Uterus (tissue), 4 donors: ENCODE measurements at regions of chr10 and their contacts with region 1.

Region 1: DNA sequence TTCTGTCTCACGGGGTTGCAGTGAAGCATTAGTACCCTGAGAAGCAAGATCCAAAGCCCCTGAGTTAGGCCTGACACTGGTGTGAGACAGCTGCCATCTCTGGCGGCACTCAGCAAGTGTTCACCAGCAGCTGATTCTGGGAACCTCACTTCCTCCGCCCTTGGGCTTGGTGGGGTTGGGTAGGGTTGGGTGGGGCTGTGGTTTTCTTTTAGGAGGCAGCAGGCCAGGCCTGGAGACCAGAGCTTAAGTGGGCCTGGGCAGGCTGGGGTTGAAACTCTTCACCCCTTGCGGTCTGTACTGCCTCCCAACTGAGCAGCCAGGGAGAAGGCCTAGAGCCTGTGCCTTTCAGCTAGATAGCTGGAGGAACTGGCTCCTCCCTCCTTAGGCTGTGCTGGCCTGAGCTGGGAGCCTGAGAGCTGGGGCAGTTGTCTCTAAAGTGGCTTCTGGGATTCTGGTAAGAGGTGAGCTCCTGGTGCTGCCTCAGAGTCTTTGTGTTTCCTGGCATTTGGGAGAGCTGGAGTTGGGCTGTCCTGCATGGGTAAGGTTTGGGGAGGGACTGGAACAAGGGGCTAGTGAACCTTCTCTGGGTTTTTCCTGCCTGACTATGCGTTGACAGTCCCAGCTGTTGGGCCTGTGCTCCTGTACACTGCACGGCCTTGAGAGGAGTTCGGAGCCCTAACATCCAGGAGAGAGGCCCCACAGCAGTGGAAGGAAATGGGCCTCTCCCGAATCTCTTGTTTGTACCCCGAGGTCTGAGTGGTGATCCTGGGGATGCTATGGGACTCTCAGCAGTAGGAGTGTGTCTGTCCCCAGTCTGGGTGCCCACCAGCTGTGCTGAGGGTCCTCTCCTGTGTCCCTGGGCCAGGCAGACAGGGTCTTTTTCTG is 5.2 kb downstream of the TSPAN14 start:
- DNase-seq: peak in 1 of 2 donors; percentile 36
- H3K4me3 ChIP-seq: no peak overlapping the region
- H3K27ac ChIP-seq: peak overlapping the region; percentile 42 to 83
- H3K4me1 ChIP-seq: peaks cover 8 to 20% of the 10 kb centered on the region in 2 donors
- H3K27me3 ChIP-seq: no peaks in the 10 kb centered on the region
- CTCF ChIP-seq: no peak
- POLR2A ChIP-seq: no peak

Region 2: GRCh38 chr10:80500572-80501380 is 41.5 kb after region 1 on chr10:
- intact Hi-C with region 1: loop called (anchors 5 kb)
- DNase-seq: no peak
- H3K4me3 ChIP-seq: no peak overlapping the region
- H3K27ac ChIP-seq: peak overlapping the region; percentile 76 to 83
- H3K4me1 ChIP-seq: peaks cover 16 to 22% of the 10 kb centered on the region in 2 donors
- H3K27me3 ChIP-seq: no peaks in the 10 kb centered on the region
- CTCF ChIP-seq: no peak
- POLR2A ChIP-seq: no peak